Naive thymus-derived CD8-positive, alpha-beta T cell (primary cell): ENCODE measurements at regions of chr6 and their contacts with region 1.

Region 1: GRCh38 chr6:26025894-26026832 is 61.1 kb upstream of the HFE start:
- DNase-seq: peak; percentile 83 to 98 (median 94)
- ATAC-seq: peak; percentile 45 to 47
- H3K4me3 Mint-ChIP-seq: peak overlapping the region; percentile 84 to 99 (median 92)
- H3K27ac Mint-ChIP-seq: peak overlapping the region; percentile 96 to 100 (median 99)
- H3K4me1 Mint-ChIP-seq: peaks cover 19 to 47% (median 38%) of the 10 kb centered on the region in 4 donors
- H3K27me3 Mint-ChIP-seq: peaks cover 0 to 2% (median 0%) of the 10 kb centered on the region in 5 donors

Region 2: GRCh38 chr6:25962149-25963127 is 63.7 kb before region 1 on chr6 and contains the start of gene TRIM38:
- POLR2A ChIA-PET with region 1: interaction called, 21 read pairs
- DNase-seq: peak; percentile 34 to 88 (median 75)
- ATAC-seq: peak; percentile 89 to 90
- H3K4me3 Mint-ChIP-seq: peak within 1 kb of the TSS; percentile 90 to 100 (median 98)
- H3K27ac Mint-ChIP-seq: peak within 1 kb of the TSS; percentile 98 to 100 (median 99)
- H3K4me1 Mint-ChIP-seq: peaks cover 40 to 90% (median 80%) of the 10 kb centered on the region in 4 donors
- H3K27me3 Mint-ChIP-seq: no peaks in the 10 kb centered on the region
- polyA plus RNA-seq, gene TRIM38: 4.3 to 7.4 (median 5.9) TPM

Region 3: GRCh38 chr6:26012061-26012460 is 14.1 kb before region 1 on chr6:
- POLR2A ChIA-PET with region 1: interaction called, 255 read pairs
- DNase-seq: no peak
- ATAC-seq: no peak
- H3K4me3 Mint-ChIP-seq: no peak overlapping the region
- H3K27ac Mint-ChIP-seq: no peak overlapping the region
- H3K4me1 Mint-ChIP-seq: peaks cover 0 to 3% (median 0%) of the 10 kb centered on the region in 4 donors
- H3K27me3 Mint-ChIP-seq: no peaks in the 10 kb centered on the region

Region 4: DNA sequence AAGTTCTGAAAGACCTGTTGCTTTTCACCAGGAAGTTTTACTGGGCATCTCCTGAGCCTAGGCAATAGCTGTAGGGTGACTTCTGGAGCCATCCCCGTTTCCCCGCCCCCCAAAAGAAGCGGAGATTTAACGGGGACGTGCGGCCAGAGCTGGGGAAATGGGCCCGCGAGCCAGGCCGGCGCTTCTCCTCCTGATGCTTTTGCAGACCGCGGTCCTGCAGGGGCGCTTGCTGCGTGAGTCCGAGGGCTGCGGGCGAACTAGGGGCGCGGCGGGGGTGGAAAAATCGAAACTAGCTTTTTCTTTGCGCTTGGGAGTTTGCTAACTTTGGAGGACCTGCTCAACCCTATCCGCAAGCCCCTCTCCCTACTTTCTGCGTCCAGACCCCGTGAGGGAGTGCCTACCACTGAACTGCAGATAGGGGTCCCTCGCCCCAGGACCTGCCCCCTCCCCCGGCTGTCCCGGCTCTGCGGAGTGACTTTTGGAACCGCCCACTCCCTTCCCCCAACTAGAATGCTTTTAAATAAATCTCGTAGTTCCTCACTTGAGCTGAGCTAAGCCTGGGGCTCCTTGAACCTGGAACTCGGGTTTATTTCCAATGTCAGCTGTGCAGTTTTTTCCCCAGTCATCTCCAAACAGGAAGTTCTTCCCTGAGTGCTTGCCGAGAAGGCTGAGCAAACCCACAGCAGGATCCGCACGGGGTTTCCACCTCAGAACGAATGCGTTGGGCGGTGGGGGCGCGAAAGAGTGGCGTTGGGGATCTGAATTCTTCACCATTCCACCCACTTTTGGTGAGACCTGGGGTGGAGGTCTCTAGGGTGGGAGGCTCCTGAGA is 61.3 kb after region 1 on chr6 and contains the start of gene HFE:
- POLR2A ChIA-PET with region 1: interaction called, 16 read pairs
- DNase-seq: peak in 6 of 10 donors; percentile 14 to 43 (median 32)
- ATAC-seq: peak in 1 of 2 donors; percentile 29
- H3K4me3 Mint-ChIP-seq: peak within 1 kb of the TSS; percentile 84 to 93 (median 88)
- H3K27ac Mint-ChIP-seq: peak within 1 kb of the TSS in 9 of 10 donors; percentile 74 to 92 (median 86)
- H3K4me1 Mint-ChIP-seq: peaks cover 12 to 56% (median 29%) of the 10 kb centered on the region in 4 donors
- H3K27me3 Mint-ChIP-seq: no peaks in the 10 kb centered on the region
- polyA plus RNA-seq, gene HFE: 0.68 to 3.8 (median 1.8) TPM

Region 5: DNA sequence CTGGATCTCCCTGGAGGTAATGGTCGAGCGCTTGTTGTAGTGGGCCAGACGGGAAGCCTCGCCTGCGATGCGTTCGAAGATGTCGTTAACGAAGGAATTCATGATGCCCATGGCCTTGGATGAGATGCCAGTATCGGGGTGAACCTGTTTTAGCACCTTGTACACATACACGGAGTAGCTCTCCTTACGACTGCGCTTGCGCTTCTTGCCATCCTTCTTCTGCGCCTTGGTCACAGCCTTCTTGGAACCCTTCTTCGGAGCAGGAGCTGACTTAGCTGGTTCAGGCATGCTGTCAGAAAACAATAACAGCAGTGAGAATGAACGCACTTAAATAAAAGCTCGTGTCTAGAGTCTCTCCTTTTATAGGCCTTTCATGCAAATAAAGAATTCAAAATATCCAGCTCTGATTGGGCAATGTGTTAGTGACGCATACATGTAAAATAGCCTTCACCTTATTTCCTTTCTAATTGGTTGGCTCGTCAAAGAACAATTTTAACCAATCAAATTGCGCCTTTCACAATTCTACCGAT is 190.3 kb after region 1 on chr6:
- POLR2A ChIA-PET with region 1: interaction called, 28 read pairs
- DNase-seq: peak; percentile 34 to 95 (median 86)
- ATAC-seq: peak; percentile 81 to 84
- H3K4me3 Mint-ChIP-seq: no peak overlapping the region
- H3K27ac Mint-ChIP-seq: no peak overlapping the region
- H3K4me1 Mint-ChIP-seq: peaks cover 0 to 12% (median 7%) of the 10 kb centered on the region in 4 donors
- H3K27me3 Mint-ChIP-seq: no peaks in the 10 kb centered on the region

Region 6: DNA sequence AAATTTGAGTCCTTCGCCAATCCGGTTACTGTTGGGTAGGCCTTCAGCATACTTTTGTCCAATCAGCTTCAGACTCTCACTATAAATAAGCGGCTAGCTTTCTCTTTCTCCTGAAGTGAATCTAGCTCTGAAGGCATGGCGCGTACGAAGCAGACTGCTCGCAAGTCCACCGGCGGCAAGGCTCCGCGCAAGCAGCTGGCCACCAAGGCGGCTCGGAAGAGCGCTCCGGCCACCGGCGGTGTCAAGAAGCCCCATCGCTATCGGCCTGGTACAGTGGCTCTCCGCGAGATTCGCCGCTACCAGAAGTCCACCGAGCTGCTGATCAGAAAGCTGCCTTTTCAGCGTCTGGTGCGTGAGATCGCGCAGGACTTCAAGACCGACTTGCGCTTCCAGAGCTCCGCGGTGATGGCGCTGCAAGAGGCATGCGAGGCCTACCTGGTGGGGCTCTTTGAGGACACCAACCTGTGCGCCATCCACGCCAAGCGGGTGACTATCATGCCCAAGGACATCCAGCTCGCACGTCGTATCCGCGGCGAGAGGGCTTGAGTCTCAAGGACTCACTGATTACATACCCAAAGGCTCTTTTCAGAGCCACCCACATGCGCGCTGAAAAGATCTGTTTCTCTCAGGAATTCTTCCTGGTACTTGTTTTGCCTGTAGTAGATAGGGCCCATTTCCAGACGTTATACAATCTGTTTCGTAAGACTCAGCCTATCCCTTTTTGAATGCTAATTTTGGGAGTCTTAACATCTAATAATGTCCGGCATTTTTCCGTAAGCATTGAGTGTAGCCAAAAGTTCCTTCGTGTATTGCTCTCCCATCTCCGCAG is 1784.0 kb after region 1 on chr6:
- POLR2A ChIA-PET with region 1: interaction called, 12 read pairs
- DNase-seq: peak; percentile 58 to 95 (median 84)
- ATAC-seq: peak; percentile 63 to 65
- H3K4me3 Mint-ChIP-seq: peak overlapping the region; percentile 90 to 97 (median 96)
- H3K27ac Mint-ChIP-seq: peak overlapping the region; percentile 97 to 99 (median 98)
- H3K4me1 Mint-ChIP-seq: peaks cover 32 to 72% (median 47%) of the 10 kb centered on the region in 4 donors
- H3K27me3 Mint-ChIP-seq: no peaks in the 10 kb centered on the region

Region 7: DNA sequence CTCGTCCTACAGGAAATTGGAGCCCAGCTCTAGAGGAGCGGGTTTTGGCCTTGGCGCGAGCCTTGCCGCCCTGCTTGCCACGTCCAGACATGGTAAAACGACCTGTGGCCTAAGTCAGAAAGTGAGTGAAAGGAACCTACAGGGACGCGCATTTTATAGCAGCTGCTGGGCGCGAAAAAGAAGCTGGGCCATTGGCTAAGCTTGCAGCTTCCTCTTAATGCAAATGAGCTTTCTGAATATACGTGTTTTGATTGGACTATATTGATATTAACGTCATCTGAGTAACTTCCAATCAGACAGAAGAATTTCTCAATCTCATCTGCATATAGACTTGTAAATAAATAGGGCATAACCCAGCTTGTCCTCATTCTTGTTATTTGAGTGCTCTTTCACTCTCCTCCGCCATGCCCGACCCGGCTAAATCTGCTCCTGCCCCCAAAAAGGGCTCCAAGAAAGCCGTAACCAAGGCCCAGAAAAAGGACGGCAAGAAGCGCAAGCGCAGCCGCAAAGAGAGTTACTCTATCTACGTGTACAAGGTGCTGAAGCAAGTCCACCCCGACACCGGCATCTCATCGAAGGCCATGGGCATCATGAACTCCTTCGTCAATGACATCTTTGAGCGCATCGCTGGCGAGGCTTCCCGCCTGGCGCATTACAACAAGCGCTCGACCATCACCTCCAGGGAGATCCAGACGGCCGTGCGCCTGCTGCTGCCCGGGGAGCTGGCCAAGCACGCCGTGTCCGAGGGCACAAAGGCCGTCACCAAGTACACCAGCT is 1867.1 kb after region 1 on chr6:
- POLR2A ChIA-PET with region 1: interaction called, 17 read pairs
- DNase-seq: peak; percentile 69 to 96 (median 90)
- ATAC-seq: peak; percentile 72 to 78
- H3K4me3 Mint-ChIP-seq: no peak overlapping the region
- H3K27ac Mint-ChIP-seq: no peak overlapping the region
- H3K4me1 Mint-ChIP-seq: peaks cover 7 to 38% (median 28%) of the 10 kb centered on the region in 4 donors
- H3K27me3 Mint-ChIP-seq: no peaks in the 10 kb centered on the region